ENCODE measurements at regions of chr13 and their contacts with region 1.

Region 1: DNA sequence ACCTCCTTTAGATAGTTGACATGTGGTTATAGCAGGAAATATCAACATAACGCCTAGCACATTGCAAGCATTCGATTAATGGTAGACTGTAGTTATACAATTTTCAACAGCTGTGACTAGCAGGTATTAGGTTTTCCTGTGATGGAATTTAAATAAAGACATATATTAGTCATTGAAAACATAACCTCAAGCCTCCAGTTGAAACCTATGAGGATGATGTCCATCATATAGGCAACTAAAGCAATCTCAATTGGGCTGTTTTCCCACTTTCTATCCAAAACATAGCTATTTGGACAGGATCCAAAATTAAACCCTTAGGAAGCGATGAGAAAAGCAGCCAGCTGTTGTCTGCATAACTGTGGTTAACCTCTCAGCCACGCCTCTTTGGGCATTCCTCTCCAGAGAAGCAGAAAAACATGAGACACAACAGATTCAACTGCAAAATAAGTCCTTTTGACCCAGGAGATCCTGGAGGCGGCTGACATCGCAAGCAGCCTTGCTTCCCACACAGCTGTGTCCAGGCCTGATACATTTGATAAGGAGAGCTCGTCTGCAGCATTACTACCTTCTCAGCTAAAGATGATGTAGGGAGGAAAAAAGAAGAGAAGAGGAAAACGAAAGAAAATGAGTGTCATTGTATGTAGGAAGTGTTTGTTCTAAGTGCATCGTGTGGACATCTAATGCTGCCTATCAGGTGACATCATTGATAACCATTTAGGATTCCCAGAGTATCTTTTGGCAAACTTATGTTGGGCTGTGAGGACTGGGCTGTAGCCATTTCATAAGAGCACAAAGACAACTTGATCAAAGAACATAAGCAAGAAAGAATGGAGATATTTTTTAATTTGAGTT is 51.9 kb upstream of the UBL3 start:
- DNase-seq: peak; percentile 49
- H3K4me3 Mint-ChIP-seq: peak overlapping the region; percentile 68
- H3K27ac Mint-ChIP-seq: no peak overlapping the region
- H3K4me1 Mint-ChIP-seq: peaks cover 25% of the 10 kb centered on the region
- H3K27me3 Mint-ChIP-seq: no peaks in the 10 kb centered on the region

Region 2: GRCh38 chr13:29923554-29924481 is 21.5 kb after region 1 on chr13:
- CTCF ChIA-PET with region 1: interaction called, 7 read pairs
- POLR2A ChIA-PET with region 1: no interaction called
- intact Hi-C with region 1: loop called (anchors 2 kb)
- DNase-seq: peak; percentile 87
- H3K4me3 Mint-ChIP-seq: no peak overlapping the region
- H3K27ac Mint-ChIP-seq: no peak overlapping the region
- H3K4me1 Mint-ChIP-seq: peaks cover 25% of the 10 kb centered on the region
- H3K27me3 Mint-ChIP-seq: no peaks in the 10 kb centered on the region

Region 3: DNA sequence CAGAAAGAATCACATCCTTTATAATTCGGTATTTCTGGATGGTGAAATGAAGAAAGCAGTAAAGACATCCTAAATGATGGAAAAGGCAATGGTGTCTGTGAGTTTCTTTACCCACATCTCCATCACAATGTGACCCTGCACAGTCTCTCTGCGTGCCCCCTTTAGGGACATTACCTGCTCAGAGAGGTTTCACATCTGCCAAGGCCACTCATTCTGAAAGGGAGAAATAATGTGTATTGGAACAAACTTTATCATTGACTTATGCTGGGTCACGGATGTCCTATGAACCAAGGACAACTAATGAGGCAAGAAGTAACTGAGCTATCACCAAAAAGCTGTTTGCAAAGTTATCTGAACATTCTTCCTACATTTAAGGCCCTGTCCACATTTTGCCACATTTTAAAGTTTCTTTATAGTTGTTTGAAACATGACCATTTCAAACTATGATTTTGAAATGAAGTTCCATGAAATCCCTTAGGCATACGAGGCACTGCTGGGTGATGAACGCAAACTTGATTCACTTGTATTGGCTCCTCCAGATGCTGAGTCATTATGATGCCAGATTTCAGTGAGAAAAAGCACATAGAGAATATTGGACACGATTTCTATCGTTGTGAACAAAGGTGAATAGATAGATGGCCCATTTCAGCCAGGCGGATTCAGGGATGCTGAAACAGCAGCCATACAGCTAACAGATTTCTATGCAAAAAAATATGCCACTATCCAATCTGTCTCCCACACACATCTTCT is 626.9 kb after region 1 on chr13:
- CTCF ChIA-PET with region 1: no interaction called
- POLR2A ChIA-PET with region 1: no interaction called
- intact Hi-C with region 1: no loop called
- DNase-seq: no peak
- H3K4me3 Mint-ChIP-seq: no peak overlapping the region
- H3K27ac Mint-ChIP-seq: no peak overlapping the region
- H3K4me1 Mint-ChIP-seq: peaks cover 5% of the 10 kb centered on the region
- H3K27me3 Mint-ChIP-seq: no peaks in the 10 kb centered on the region

Measured in activated CD4-positive, alpha-beta memory T cell treated with anti-CD3 and anti-CD28 coated beads for 36 hours (primary cell).